GM13977 (cell line): ENCODE measurements at regions of chr16 and their contacts with region 1.

Region 1: GRCh38 chr16:74718741-74719610 is 18.3 kb upstream of the MLKL start:
- DNase-seq: no peak
- CTCF ChIP-seq: peak; percentile 4

Region 2: GRCh38 chr16:74862741-74863244 is 143.8 kb after region 1 on chr16:
- in situ Hi-C with region 1: loop called (anchors 5 kb)
- DNase-seq: peak; percentile 80
- CTCF ChIP-seq: peak; percentile 73